ENCODE measurements at regions of chr10 and their contacts with region 1.

Region 1: GRCh38 chr10:86139066-86139657 is 227.4 kb downstream of the GRID1 start:
- DNase-seq: peak; percentile 52
- H3K4me3 Mint-ChIP-seq: no peak overlapping the region
- H3K27ac Mint-ChIP-seq: no peak overlapping the region
- H3K4me1 Mint-ChIP-seq: no peaks in the 10 kb centered on the region
- H3K27me3 Mint-ChIP-seq: no peaks in the 10 kb centered on the region

Region 2: DNA sequence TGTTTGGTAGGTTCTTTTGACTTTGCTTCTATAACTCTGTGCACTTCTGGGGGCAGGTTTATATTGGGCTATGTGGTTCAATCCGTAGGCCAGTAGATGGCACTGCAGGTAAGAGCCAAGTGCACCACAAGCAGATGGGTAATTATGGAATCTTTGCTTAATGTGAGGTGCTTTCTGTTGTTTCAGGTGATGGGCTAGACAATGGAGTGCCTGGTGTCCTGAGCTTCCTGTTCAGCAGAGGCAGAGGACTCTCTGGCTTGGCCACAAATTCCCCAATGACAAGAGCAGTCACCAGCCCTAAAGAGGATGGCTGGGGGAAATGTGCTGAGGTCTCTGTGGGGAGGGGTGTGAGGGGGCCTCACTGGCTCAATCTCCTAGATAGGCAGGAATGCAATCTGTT is 1355.8 kb before region 1 on chr10:
- CTCF ChIA-PET with region 1: no interaction called
- intact Hi-C with region 1: loop called (anchors 5 kb)
- DNase-seq: peak; percentile 31
- H3K4me3 Mint-ChIP-seq: no peak overlapping the region
- H3K27ac Mint-ChIP-seq: no peak overlapping the region
- H3K4me1 Mint-ChIP-seq: no peaks in the 10 kb centered on the region
- H3K27me3 Mint-ChIP-seq: no peaks in the 10 kb centered on the region

Region 3: GRCh38 chr10:85548034-85548433 is 591.1 kb before region 1 on chr10:
- CTCF ChIA-PET with region 1: no interaction called
- intact Hi-C with region 1: loop called (anchors 10 kb)
- DNase-seq: peak; percentile 42
- H3K4me3 Mint-ChIP-seq: no peak overlapping the region
- H3K27ac Mint-ChIP-seq: no peak overlapping the region
- H3K4me1 Mint-ChIP-seq: no peaks in the 10 kb centered on the region
- H3K27me3 Mint-ChIP-seq: peaks cover 5% of the 10 kb centered on the region

Region 4: GRCh38 chr10:85995791-85996190 is 143.4 kb before region 1 on chr10:
- CTCF ChIA-PET with region 1: no interaction called
- intact Hi-C with region 1: loop called (anchors 5 kb)
- DNase-seq: peak; percentile 30
- H3K4me3 Mint-ChIP-seq: no peak overlapping the region
- H3K27ac Mint-ChIP-seq: no peak overlapping the region
- H3K4me1 Mint-ChIP-seq: no peaks in the 10 kb centered on the region
- H3K27me3 Mint-ChIP-seq: peaks cover 14% of the 10 kb centered on the region